Esophagus muscularis mucosa (tissue), 4 donors: ENCODE measurements at regions of chr21 and their contacts with region 1.

Region 1: DNA sequence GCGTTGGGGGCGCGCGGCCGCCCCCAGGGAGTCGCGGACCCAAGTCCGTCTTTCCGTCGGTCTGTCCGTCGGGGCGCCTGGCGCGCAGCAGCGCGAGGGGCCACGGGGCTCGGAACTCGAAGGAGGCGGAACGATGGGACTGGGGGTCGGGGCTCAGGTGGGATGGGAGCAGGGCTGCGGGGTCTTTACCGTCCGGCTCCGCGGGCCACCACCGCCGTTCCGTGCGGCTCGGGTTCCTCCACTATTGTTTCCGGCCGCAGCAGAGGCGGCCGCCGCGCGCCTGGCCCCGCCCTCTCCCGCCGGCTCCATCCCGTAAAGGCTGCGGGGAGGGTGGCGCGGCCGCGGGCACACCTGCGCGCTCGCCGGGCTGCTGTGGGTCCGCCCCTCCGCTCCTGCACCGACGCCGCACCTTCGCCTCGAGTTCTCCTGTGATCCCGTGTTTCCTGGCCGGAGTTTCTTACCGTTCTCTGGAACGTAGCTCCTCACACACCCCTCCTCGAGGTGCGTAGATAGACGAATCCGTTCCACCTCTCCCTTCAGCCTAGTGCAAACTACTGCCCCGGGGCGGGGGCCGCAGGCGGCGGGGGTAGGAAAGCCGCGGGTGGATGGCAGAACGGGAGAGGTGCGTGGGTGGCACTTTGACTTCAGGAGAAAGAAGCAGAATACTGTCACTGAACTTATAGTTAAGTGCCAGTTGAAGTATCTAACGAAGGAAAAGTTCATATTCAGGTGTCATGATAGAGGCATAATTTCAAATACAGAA is at the start of gene C21orf91:
- DNase-seq: peak; percentile 96
- H3K4me3 ChIP-seq: peak within 1 kb of the TSS; percentile 75 to 98 (median 92)
- H3K27ac ChIP-seq: peak within 1 kb of the TSS; percentile 85 to 94 (median 93)
- H3K4me1 ChIP-seq: peaks cover 18 to 30% (median 30%) of the 10 kb centered on the region in 4 donors
- H3K27me3 ChIP-seq: no peaks in the 10 kb centered on the region
- CTCF ChIP-seq: no peak
- EP300 ChIP-seq: no peak
- POLR2A ChIP-seq: no peak
- total RNA-seq, gene C21orf91: 7.9 to 10.9 (median 9.1) TPM

Region 2: DNA sequence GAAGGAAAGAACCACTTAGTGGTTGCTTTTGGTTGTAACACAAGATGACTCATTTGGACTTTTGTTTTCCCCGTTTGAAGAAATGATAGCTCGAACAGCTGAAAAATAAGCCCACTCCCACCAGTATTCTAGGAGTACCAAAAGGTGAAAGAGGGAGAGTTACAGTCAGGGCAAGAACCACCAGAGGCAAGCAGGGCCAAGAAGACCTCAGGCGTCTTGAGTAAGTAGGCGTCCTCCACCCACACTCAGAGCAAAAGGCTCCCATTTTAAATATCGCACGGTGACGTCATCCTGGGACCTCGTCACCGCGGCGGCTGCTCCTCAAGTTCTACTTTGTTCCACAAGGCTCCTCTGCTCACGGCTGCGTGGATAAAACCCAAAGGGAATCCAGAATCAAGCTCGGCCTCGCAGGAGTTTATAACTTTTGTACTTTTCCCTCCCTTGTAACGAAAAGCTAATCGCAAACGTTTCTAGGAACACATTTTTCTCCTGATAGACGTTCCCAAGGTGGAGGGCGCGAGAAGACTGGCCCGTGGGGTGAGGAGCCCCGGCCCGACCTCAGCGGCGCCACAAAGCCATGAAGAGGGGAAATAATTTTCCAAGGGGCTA is 207.8 kb before region 1 on chr21:
- intact Hi-C with region 1: loop called (anchors 10 kb)
- DNase-seq: peak; percentile 95
- H3K4me3 ChIP-seq: peak overlapping the region; percentile 90 to 92 (median 92)
- H3K27ac ChIP-seq: peak overlapping the region; percentile 91 to 94 (median 92)
- H3K4me1 ChIP-seq: peaks cover 7 to 24% (median 23%) of the 10 kb centered on the region in 4 donors
- H3K27me3 ChIP-seq: no peaks in the 10 kb centered on the region
- CTCF ChIP-seq: peak in 1 of 3 experiments; percentile 14
- EP300 ChIP-seq: no peak
- POLR2A ChIP-seq: no peak

Region 3: DNA sequence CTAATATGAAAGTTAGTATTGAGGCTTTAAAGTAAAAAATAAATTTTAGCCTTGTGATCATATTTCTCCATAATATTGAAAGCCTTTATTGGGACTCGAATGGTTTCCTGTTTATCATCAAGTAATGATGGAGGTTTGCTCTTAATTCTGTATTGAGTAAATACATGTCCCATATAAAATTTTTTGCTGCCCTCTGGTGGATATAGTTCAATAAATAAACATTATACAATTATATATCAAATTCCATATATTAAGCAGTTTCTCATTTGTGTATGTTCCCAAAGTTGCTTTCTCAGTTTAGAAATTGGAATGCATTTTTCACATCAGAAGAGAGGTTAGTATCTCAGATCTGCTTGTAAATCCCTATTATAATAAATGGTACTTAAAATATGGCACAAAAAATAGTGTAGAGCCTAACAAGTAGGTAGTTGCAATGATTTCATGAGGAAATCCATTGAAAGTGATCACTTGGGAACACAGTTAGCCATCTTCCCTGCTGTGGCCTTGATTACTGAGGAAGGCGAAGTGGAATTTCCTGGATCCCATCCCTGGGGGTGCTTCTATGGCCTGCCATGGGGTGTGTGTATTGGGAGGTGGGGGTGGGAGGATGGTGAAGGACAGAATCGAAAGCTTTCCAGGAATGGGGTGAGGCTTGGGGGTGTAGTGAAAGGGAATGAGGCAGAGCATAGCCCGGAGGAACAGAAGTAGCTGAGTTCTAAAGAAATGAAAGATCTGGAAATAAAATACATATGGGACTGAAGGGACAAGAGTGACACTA is 83.9 kb after region 1 on chr21:
- intact Hi-C with region 1: loop called (anchors 10 kb)
- DNase-seq: no peak
- H3K4me3 ChIP-seq: no peak overlapping the region
- H3K27ac ChIP-seq: no peak overlapping the region
- H3K4me1 ChIP-seq: peaks cover 0 to 10% (median 5%) of the 10 kb centered on the region in 4 donors
- H3K27me3 ChIP-seq: no peaks in the 10 kb centered on the region
- CTCF ChIP-seq: peak; percentile 6 to 31 (median 26)
- EP300 ChIP-seq: no peak
- POLR2A ChIP-seq: no peak